ENCODE measurements at regions of chr1 and their contacts with region 1.

Region 1: GRCh38 chr1:110619412-110620249 is 13.5 kb upstream of the KCNA2 start:
- DNase-seq: peak; percentile 90
- H3K4me3 ChIP-seq: no peak overlapping the region
- H3K27ac ChIP-seq: no peak overlapping the region
- H3K4me1 ChIP-seq: peaks cover 24% of the 10 kb centered on the region
- H3K27me3 ChIP-seq: peaks cover 44% of the 10 kb centered on the region
- CTCF ChIP-seq: peak; percentile 99

Region 2: GRCh38 chr1:110524311-110525251 is 95.0 kb before region 1 on chr1:
- CTCF ChIA-PET with region 1: interaction called, 4 read pairs
- POLR2A ChIA-PET with region 1: no interaction called
- intact Hi-C with region 1: loop called (anchors 1 kb)
- DNase-seq: peak; percentile 72
- H3K4me3 ChIP-seq: no peak overlapping the region
- H3K27ac ChIP-seq: no peak overlapping the region
- H3K4me1 ChIP-seq: no peaks in the 10 kb centered on the region
- H3K27me3 ChIP-seq: no peaks in the 10 kb centered on the region
- CTCF ChIP-seq: peak; percentile 93

Region 3: GRCh38 chr1:110554871-110555801 is 64.5 kb before region 1 on chr1:
- CTCF ChIA-PET with region 1: interaction called, 7 read pairs
- POLR2A ChIA-PET with region 1: no interaction called
- intact Hi-C with region 1: loop called (anchors 1 kb)
- DNase-seq: peak; percentile 52
- H3K4me3 ChIP-seq: peak overlapping the region; percentile 36
- H3K27ac ChIP-seq: no peak overlapping the region
- H3K4me1 ChIP-seq: peaks cover 8% of the 10 kb centered on the region
- H3K27me3 ChIP-seq: no peaks in the 10 kb centered on the region
- CTCF ChIP-seq: peak; percentile 76

Region 4: GRCh38 chr1:110766025-110766647 is 146.5 kb after region 1 on chr1:
- CTCF ChIA-PET with region 1: interaction called, 17 read pairs
- POLR2A ChIA-PET with region 1: no interaction called
- intact Hi-C with region 1: loop called (anchors 1 kb)
- DNase-seq: peak; percentile 64
- H3K4me3 ChIP-seq: no peak overlapping the region
- H3K27ac ChIP-seq: no peak overlapping the region
- H3K4me1 ChIP-seq: no peaks in the 10 kb centered on the region
- H3K27me3 ChIP-seq: peaks cover 24% of the 10 kb centered on the region
- CTCF ChIP-seq: peak; percentile 86

Region 5: GRCh38 chr1:110780600-110781484 is 161.2 kb after region 1 on chr1:
- CTCF ChIA-PET with region 1: interaction called, 10 read pairs
- POLR2A ChIA-PET with region 1: no interaction called
- intact Hi-C with region 1: loop called (anchors 1 kb)
- DNase-seq: peak; percentile 89
- H3K4me3 ChIP-seq: no peak overlapping the region
- H3K27ac ChIP-seq: no peak overlapping the region
- H3K4me1 ChIP-seq: peaks cover 28% of the 10 kb centered on the region
- H3K27me3 ChIP-seq: peaks cover 3% of the 10 kb centered on the region
- CTCF ChIP-seq: peak; percentile 82